ENCODE measurements at regions of chr2 and their contacts with region 1.

Region 1: DNA sequence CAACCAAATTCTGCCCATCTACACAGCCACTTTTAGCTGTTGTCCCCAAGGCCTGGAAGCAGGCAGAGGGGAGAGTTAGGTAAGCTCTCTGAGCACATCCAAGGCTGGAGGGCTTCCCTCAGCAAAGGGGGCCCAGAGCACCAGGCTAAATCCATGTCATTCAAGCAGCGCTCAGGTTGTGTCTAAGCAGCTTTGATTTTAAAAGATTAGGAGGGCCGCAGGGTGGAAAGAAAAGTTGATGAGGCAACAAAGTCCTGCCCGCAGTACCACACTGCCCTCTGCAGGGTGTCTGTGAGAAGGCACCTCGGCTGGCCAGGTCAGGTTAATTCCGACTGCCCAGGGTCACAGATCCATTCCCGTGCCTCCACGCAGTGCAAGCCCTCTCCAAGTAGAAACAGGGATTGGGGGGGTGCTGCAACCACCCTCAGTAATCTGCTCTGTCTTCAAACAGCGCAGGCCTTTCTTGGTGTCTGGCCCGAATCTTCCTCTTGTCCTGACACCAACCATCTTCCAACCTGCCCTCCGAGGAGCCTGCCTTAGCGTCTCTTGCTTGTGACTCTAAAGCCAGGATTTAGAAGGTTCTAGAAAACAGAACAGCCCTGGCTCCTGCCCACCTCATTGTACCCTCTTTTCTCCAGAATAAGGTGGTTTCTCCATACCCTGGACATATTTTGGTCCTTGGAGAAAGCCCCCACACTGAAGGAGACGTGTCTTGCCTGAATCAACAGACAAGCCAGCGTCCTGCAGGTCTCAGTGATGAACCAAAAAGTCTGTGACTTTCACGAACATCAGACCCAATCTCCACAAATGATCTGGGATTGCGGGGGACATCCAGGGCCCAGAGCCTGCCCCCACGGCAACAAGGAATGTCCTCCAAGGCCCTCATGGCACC is 289.2 kb downstream of the TNS1 start:
- DNase-seq: peak; percentile 55
- H3K4me3 ChIP-seq: no peak overlapping the region
- H3K27ac ChIP-seq: no peak overlapping the region
- H3K4me1 ChIP-seq: no peaks in the 10 kb centered on the region
- H3K27me3 ChIP-seq: peaks cover 0 to 5% of the 10 kb centered on the region in 2 experiments
- CTCF ChIP-seq: peak; percentile 77 to 94
- POLR2A ChIP-seq: no peak

Region 2: DNA sequence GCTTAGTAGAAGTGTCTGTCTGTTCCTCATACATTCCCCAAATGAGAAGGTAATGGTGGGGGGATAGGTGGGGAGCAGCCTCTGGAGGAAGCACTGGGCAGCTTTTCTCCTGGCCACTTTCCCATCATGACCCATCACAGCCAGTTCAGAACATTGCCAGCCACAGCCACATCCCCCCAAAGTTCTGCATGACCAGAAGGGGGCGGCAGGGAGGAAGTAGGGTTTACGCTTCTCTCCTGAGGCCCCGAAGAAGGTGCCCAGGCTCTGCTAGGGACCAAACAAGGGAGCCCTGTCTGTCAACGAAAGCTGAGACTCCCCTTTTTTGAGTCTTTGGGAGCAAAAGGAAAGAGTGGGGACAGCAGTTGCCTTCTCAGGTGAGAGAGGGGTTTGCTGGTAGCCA is 1026.0 kb before region 1 on chr2:
- CTCF ChIA-PET with region 1: interaction called, 73 read pairs
- POLR2A ChIA-PET with region 1: no interaction called
- dilution Hi-C with region 1: no loop called
- intact Hi-C with region 1: loop called (anchors 1 kb)
- DNase-seq: no peak
- H3K4me3 ChIP-seq: no peak overlapping the region
- H3K27ac ChIP-seq: no peak overlapping the region
- H3K4me1 ChIP-seq: peaks cover 10% of the 10 kb centered on the region
- H3K27me3 ChIP-seq: peaks cover 33 to 41% of the 10 kb centered on the region in 2 experiments
- CTCF ChIP-seq: peak; percentile 25 to 44
- POLR2A ChIP-seq: no peak

Region 3: DNA sequence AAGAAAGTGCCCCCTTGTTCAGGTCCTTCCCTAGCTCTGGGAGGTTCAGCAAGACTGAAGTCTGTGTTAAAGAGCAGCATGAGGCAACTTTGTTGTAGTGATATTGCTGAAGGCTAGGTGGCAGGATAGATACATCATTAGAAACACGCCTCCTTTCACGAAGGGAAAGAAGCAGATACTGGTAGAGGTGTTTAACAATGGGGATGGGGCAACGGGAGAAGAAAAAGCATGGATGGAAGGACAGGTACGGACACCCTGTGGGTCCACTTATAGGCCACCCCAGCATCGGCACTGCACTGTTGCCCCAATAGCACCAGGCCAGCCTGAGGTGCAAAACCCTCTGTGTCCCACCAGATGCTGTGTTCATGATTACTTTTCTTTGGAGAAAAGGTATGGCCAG is 1014.7 kb before region 1 on chr2:
- CTCF ChIA-PET with region 1: interaction called, 25 read pairs
- POLR2A ChIA-PET with region 1: no interaction called
- dilution Hi-C with region 1: no loop called
- intact Hi-C with region 1: loop called (anchors 1 kb)
- DNase-seq: peak; percentile 59
- H3K4me3 ChIP-seq: no peak overlapping the region
- H3K27ac ChIP-seq: no peak overlapping the region
- H3K4me1 ChIP-seq: peaks cover 3% of the 10 kb centered on the region
- H3K27me3 ChIP-seq: peaks cover 52 to 58% of the 10 kb centered on the region in 2 experiments
- CTCF ChIP-seq: peak; percentile 52
- POLR2A ChIP-seq: no peak

Region 4: GRCh38 chr2:217650716-217651360 is 62.8 kb before region 1 on chr2:
- CTCF ChIA-PET with region 1: interaction called, 58 read pairs
- POLR2A ChIA-PET with region 1: no interaction called
- dilution Hi-C with region 1: no loop called
- intact Hi-C with region 1: loop called (anchors 1 kb)
- DNase-seq: peak; percentile 51
- H3K4me3 ChIP-seq: no peak overlapping the region
- H3K27ac ChIP-seq: no peak overlapping the region
- H3K4me1 ChIP-seq: no peaks in the 10 kb centered on the region
- H3K27me3 ChIP-seq: no peaks in the 10 kb centered on the region
- CTCF ChIP-seq: peak; percentile 68 to 77
- POLR2A ChIP-seq: no peak